HepG2 (cell line): ENCODE measurements at regions of chr7 and their contacts with region 1.

Region 1: GRCh38 chr7:23696916-23697441 is 13.0 kb upstream of the STK31 start:
- DNase-seq: peak; percentile 58
- ATAC-seq: peak; percentile 97
- H3K4me3 ChIP-seq: no peak overlapping the region
- H3K27ac ChIP-seq: no peak overlapping the region
- H3K4me1 ChIP-seq: no peaks in the 10 kb centered on the region
- H3K27me3 ChIP-seq: no peaks in the 10 kb centered on the region
- CTCF ChIP-seq: peak; percentile 81
- EP300 ChIP-seq: no peak
- POLR2A ChIP-seq: no peak
- RAD21 ChIP-seq: peak; percentile 68

Region 2: GRCh38 chr7:23645822-23646221 is 51.2 kb before region 1 on chr7:
- CTCF ChIA-PET with region 1: no interaction called
- POLR2A ChIA-PET with region 1: no interaction called
- in situ Hi-C with region 1: no loop called
- intact Hi-C with region 1: loop called (anchors 2 kb)
- DNase-seq: no peak
- ATAC-seq: no peak
- H3K4me3 ChIP-seq: no peak overlapping the region
- H3K27ac ChIP-seq: no peak overlapping the region
- H3K4me1 ChIP-seq: no peaks in the 10 kb centered on the region
- H3K27me3 ChIP-seq: no peaks in the 10 kb centered on the region
- CTCF ChIP-seq: no peak
- EP300 ChIP-seq: no peak
- POLR2A ChIP-seq: no peak
- RAD21 ChIP-seq: no peak

Region 3: DNA sequence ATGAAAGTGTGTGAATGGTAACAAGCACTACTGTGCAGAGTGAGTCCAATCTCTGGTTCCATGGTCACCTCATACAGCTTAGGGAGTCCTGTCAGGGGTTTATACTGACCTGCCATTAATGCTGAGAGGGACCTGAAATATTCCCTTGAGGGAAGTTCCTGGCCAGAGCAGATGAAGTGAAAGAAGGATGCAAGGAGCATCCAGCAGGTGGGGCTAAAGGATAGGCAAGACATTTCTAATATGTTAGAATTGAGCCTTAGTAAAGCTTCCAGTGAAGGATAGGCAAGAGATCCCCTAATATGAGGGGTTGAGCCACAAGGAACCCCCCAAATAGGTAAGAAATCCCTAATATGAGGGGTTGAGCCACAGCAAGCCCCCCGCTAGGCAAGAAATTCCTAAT is 42.5 kb before region 1 on chr7:
- CTCF ChIA-PET with region 1: no interaction called
- POLR2A ChIA-PET with region 1: no interaction called
- in situ Hi-C with region 1: no loop called
- intact Hi-C with region 1: loop called (anchors 5 kb)
- DNase-seq: peak; percentile 15
- ATAC-seq: peak; percentile 62
- H3K4me3 ChIP-seq: no peak overlapping the region
- H3K27ac ChIP-seq: no peak overlapping the region
- H3K4me1 ChIP-seq: no peaks in the 10 kb centered on the region
- H3K27me3 ChIP-seq: peaks cover 0 to 3% of the 10 kb centered on the region in 2 experiments; a peak in 2 of 5 replicates
- CTCF ChIP-seq: peak; percentile 34
- EP300 ChIP-seq: no peak
- POLR2A ChIP-seq: no peak
- RAD21 ChIP-seq: peak; percentile 21; the same call in 1 of the 2 replicates

Region 4: GRCh38 chr7:23721456-23721855 is 24.5 kb after region 1 on chr7:
- CTCF ChIA-PET with region 1: no interaction called
- POLR2A ChIA-PET with region 1: no interaction called
- in situ Hi-C with region 1: no loop called
- intact Hi-C with region 1: no loop called
- DNase-seq: no peak
- ATAC-seq: no peak
- H3K4me3 ChIP-seq: no peak overlapping the region
- H3K27ac ChIP-seq: no peak overlapping the region
- H3K4me1 ChIP-seq: no peaks in the 10 kb centered on the region
- H3K27me3 ChIP-seq: no peaks in the 10 kb centered on the region
- CTCF ChIP-seq: no peak
- EP300 ChIP-seq: no peak
- POLR2A ChIP-seq: no peak
- RAD21 ChIP-seq: no peak